ENCODE measurements at regions of chr9 and their contacts with region 1.

Region 1: DNA sequence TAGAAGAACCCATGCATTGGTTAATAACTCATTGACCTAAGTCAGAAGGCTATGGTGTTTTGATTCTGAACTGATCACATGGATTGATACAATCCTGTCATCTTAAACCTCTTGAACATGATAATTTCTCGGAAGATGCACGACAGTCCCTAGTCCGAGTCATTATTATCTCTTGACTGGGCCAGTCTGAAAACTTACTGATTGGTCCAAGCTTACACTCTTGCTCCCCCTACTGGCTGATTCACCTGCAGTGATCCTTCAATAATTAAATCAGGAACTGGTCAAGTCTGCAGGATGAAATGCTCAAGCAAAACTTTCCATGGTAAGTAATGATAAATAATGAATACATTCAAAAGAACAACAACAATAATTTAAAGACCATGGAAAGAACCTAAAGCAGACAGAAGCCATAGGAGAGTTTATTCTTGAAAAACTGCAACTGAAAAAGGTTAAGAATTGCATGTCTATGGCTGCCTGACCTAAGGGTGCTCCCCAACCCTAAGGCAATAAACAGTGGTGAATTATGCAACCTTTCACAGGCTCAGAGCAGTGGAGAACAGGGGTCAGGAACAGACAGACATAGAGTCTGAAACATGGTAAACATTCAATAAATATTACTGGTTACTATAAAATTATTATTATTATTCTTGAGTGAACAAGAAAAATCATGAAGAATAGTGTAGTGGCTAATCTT is 79.3 kb downstream of the BRINP1 start:
- DNase-seq: no peak
- H3K4me3 ChIP-seq: no peak overlapping the region
- H3K27ac ChIP-seq: no peak overlapping the region
- H3K4me1 ChIP-seq: peaks cover 0 to 7% (median 3%) of the 10 kb centered on the region in 4 experiments; a peak in 2 of 7 replicates
- H3K27me3 ChIP-seq: no peaks in the 10 kb centered on the region
- CTCF ChIP-seq: peak in 2 of 3 experiments; percentile 69 to 85; a peak in 3 of 4 replicates
- EP300 ChIP-seq: no peak
- POLR2A ChIP-seq: no peak
- RAD21 ChIP-seq: peak; percentile 83 to 88

Region 2: GRCh38 chr9:119360237-119360636 is 70.3 kb after region 1 on chr9:
- CTCF ChIA-PET with region 1: interaction called, 62 read pairs
- POLR2A ChIA-PET with region 1: interaction called, 3 read pairs
- DNase-seq: no peak
- H3K4me3 ChIP-seq: no peak overlapping the region
- H3K27ac ChIP-seq: no peak overlapping the region
- H3K4me1 ChIP-seq: peaks cover 2 to 20% (median 5%) of the 10 kb centered on the region in 4 experiments; a peak in 4 of 7 replicates
- H3K27me3 ChIP-seq: no peaks in the 10 kb centered on the region
- CTCF ChIP-seq: no peak
- EP300 ChIP-seq: no peak
- POLR2A ChIP-seq: no peak
- RAD21 ChIP-seq: no peak

Measured in H1 (cell line).